ENCODE measurements at regions of chr6 and their contacts with region 1.

Region 1: DNA sequence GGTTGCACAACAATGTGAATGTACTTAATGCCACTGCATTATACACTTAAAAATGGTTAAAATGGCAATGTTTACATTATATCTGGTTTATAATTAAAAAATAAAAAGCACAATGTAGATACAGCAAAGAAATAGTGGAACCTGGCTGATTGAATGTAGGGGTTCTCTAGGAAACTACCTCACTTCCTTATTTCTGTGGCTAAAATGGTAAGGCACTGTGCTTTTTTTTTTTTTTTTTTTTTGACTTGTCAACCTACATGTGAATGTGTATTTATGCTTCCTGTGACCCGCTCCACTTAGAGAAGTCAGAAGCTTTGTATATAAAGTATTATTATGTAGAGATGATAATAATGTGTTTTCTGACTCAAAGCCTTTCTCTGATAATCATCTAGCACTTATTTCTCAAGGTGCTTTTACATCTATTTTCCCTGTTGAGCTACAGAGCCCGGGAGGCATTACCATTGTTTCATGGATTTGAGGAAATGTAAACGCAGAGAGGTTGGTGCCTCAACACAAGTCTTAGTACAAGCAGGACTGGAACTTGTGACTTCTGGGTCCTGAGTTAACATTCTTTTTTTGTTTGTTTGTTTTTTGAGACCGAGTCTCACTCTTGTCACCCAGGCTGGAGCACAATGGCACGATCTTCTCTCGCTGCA is 55.1 kb downstream of the SOX4 start:
- DNase-seq: no peak
- ATAC-seq: no peak
- H3K4me3 ChIP-seq: no peak overlapping the region
- H3K27ac ChIP-seq: no peak overlapping the region
- H3K4me1 ChIP-seq: no peaks in the 10 kb centered on the region
- H3K27me3 ChIP-seq: no peaks in the 10 kb centered on the region
- CTCF ChIP-seq: no peak

Region 2: GRCh38 chr6:21603082-21603952 is 45.3 kb before region 1 on chr6:
- CTCF ChIA-PET with region 1: no interaction called
- POLR2A ChIA-PET with region 1: interaction called, 12 read pairs
- in situ Hi-C with region 1: no loop called
- intact Hi-C with region 1: no loop called
- DNase-seq: no peak
- ATAC-seq: no peak
- H3K4me3 ChIP-seq: no peak overlapping the region
- H3K27ac ChIP-seq: peak overlapping the region; percentile 67; the same call in 1 of the 2 replicates
- H3K4me1 ChIP-seq: peaks cover 22% of the 10 kb centered on the region
- H3K27me3 ChIP-seq: no peaks in the 10 kb centered on the region
- CTCF ChIP-seq: no peak

Region 3: DNA sequence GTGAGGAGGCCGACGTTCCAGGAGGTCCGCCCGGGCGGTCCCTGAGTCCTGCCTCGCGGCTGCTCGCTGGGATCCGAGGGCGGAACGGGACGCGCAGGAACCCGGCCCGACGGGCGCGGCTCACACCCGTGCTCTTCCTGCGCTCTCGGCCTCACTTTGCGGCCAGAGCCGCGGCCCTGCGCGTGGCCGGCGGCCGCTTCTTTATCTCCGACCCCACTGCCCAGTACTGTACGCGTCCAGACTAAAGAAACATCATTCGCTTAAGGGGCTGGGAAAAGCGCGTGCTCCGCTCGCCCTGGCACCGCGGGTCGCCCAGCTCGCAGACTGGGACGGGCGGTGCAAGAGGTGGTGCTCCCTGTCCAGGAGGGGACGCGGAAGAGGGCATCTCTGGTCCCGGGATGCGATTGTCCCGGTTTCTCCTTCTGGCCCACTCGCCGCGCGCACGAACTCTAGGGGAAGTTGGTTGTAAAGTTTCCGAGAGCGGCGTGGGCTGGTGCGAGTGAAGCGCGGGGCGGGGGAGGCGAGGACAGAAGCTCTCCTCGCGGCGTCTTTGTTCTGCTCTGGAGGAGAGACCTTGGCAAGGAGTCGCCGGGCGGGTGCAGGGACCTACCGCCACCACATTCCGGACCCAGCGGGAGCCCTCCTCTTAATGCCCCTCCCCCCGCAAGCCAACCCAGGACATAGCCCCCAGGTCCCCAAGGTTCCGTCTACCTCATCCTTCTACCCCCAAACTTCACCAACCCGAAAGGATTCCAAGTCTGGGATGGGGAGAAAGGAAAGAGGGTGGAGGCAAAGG is 15.9 kb after region 1 on chr6:
- CTCF ChIA-PET with region 1: interaction called, 10 read pairs
- POLR2A ChIA-PET with region 1: no interaction called
- in situ Hi-C with region 1: no loop called
- intact Hi-C with region 1: no loop called
- DNase-seq: no peak
- ATAC-seq: peak; percentile 63
- H3K4me3 ChIP-seq: peak overlapping the region; percentile 33 to 78
- H3K27ac ChIP-seq: no peak overlapping the region; the same call in 1 of the 2 replicates
- H3K4me1 ChIP-seq: no peaks in the 10 kb centered on the region; the same call in none of the 2 replicates
- H3K27me3 ChIP-seq: no peaks in the 10 kb centered on the region
- CTCF ChIP-seq: no peak

Region 4: GRCh38 chr6:21780679-21781078 is 132.1 kb after region 1 on chr6:
- CTCF ChIA-PET with region 1: no interaction called
- POLR2A ChIA-PET with region 1: no interaction called
- in situ Hi-C with region 1: no loop called
- intact Hi-C with region 1: no loop called
- DNase-seq: no peak
- ATAC-seq: no peak
- H3K4me3 ChIP-seq: no peak overlapping the region
- H3K27ac ChIP-seq: peak overlapping the region; percentile 56; the same call in 1 of the 2 replicates
- H3K4me1 ChIP-seq: peaks cover 2% of the 10 kb centered on the region; the same call in 1 of the 2 replicates
- H3K27me3 ChIP-seq: no peaks in the 10 kb centered on the region
- CTCF ChIP-seq: no peak

Measured in Panc1 (cell line).